Caco-2 (cell line): ENCODE measurements at regions of chr1 and their contacts with region 1.

Region 1: DNA sequence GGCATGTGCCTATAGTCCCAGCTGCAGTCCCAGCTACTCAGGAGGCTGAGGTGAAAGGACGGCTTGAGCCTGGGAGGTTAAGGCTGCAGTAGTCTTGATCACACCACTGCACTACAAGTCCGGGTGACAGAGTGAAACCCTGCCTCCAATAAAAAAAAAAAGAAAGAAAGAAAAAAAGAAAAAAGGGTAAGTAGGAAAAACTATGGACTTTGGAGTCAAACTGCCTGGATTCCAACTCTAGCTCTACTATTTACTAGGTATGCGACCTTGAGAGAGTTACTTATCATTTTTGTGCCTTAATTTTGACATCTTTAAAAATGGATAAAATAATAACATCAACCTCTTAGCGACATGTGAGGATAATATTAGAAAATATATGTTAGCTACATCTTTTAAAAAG is 150.8 kb downstream of the SLC45A1 start:
- DNase-seq: no peak
- H3K4me3 ChIP-seq: no peak overlapping the region
- H3K4me3 Mint-ChIP-seq: no peak overlapping the region
- H3K27ac Mint-ChIP-seq: peak overlapping the region; percentile 14
- H3K4me1 ChIP-seq: peaks cover 32% of the 10 kb centered on the region
- H3K4me1 Mint-ChIP-seq: peaks cover 35% of the 10 kb centered on the region
- H3K27me3 ChIP-seq: no peaks in the 10 kb centered on the region
- H3K27me3 Mint-ChIP-seq: no peaks in the 10 kb centered on the region
- CTCF ChIP-seq: no peak

Region 2: DNA sequence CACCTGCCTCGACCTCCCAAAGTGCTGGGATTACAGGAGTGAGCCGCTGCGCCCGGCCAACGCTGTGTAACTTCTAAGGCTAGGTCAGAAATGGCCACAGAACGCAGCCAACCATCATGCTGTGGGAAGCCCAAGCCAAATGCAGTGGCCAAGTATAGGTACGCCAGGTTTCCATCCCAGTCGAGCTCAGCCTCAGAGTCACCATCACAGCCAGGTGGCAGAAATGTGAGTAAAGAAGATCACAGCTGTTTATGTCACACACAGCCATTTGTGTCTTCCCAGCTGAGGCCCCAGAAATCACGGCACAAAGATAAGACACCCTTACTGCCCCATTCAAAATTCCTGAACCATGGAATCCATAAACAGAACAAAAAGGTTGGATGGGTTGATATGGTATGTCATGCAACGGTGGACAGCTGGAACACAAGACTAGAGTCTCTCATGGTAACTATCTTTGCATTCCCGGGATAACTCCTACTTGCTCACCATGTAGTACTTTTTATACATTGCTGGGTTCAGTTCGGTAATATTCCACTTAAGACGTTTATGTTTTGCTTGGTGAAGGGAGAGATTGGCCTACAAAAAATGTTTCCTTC is 66.5 kb before region 1 on chr1:
- CTCF ChIA-PET with region 1: no interaction called
- POLR2A ChIA-PET with region 1: no interaction called
- intact Hi-C with region 1: no loop called
- DNase-seq: no peak
- H3K4me3 ChIP-seq: no peak overlapping the region
- H3K4me3 Mint-ChIP-seq: no peak overlapping the region
- H3K27ac Mint-ChIP-seq: no peak overlapping the region
- H3K4me1 ChIP-seq: peaks cover 5% of the 10 kb centered on the region; the same call in 1 of the 2 replicates
- H3K4me1 Mint-ChIP-seq: peaks cover 20% of the 10 kb centered on the region
- H3K27me3 ChIP-seq: no peaks in the 10 kb centered on the region
- H3K27me3 Mint-ChIP-seq: no peaks in the 10 kb centered on the region
- CTCF ChIP-seq: no peak

Region 3: GRCh38 chr1:8727809-8728213 is 259.1 kb after region 1 on chr1:
- CTCF ChIA-PET with region 1: no interaction called
- POLR2A ChIA-PET with region 1: interaction called, 16 read pairs
- intact Hi-C with region 1: no loop called
- DNase-seq: no peak
- H3K4me3 ChIP-seq: no peak overlapping the region
- H3K4me3 Mint-ChIP-seq: no peak overlapping the region
- H3K27ac Mint-ChIP-seq: no peak overlapping the region
- H3K4me1 ChIP-seq: peaks cover 9% of the 10 kb centered on the region; the same call in 1 of the 2 replicates
- H3K4me1 Mint-ChIP-seq: peaks cover 5% of the 10 kb centered on the region
- H3K27me3 ChIP-seq: no peaks in the 10 kb centered on the region
- H3K27me3 Mint-ChIP-seq: no peaks in the 10 kb centered on the region
- CTCF ChIP-seq: no peak